ENCODE measurements at regions of chr2 and their contacts with region 1.

Region 1: GRCh38 chr2:232521959-232522622 is 1.9 kb downstream of the PRSS56 start:
- DNase-seq: peak; percentile 78
- ATAC-seq: peak; percentile 74
- H3K4me3 ChIP-seq: peak overlapping the region in 3 of 5 experiments; percentile 32 to 58 (median 43)
- H3K4me3 Mint-ChIP-seq: peak overlapping the region; percentile 74
- H3K27ac ChIP-seq: no peak overlapping the region
- H3K27ac Mint-ChIP-seq: no peak overlapping the region
- H3K4me1 ChIP-seq: peaks cover 30 to 32% of the 10 kb centered on the region in 2 donors
- H3K4me1 Mint-ChIP-seq: peaks cover 17% of the 10 kb centered on the region
- H3K27me3 ChIP-seq: peaks cover 0 to 50% (median 22%) of the 10 kb centered on the region in 4 experiments
- H3K27me3 Mint-ChIP-seq: peaks cover 26% of the 10 kb centered on the region
- CTCF ChIP-seq: peak; percentile 94

Region 2: DNA sequence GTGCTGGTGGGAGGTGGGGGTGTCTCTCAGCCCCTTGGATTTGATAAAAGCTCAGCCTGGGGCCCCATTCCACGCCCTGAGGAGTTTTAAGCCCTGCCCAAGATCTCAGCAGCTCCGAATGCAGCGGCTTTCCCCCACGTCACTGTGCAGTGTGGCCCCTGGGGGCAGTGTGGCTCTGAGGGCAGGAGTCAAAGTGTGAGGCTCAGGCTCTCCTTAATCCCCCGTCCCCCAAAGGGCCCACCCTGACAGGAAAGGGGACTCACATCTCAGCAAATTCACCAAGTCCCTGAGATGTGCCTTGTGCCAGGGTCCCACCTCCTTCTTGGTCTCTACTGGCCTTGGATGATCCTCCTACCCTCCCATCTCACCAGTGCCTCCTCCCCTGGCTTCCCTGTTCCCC is 621.1 kb before region 1 on chr2:
- CTCF ChIA-PET with region 1: no interaction called
- POLR2A ChIA-PET with region 1: no interaction called
- intact Hi-C with region 1: loop called (anchors 5 kb)
- DNase-seq: no peak
- ATAC-seq: no peak
- H3K4me3 ChIP-seq: no peak overlapping the region
- H3K4me3 Mint-ChIP-seq: no peak overlapping the region
- H3K27ac ChIP-seq: no peak overlapping the region
- H3K27ac Mint-ChIP-seq: no peak overlapping the region
- H3K4me1 ChIP-seq: no peaks in the 10 kb centered on the region
- H3K4me1 Mint-ChIP-seq: no peaks in the 10 kb centered on the region
- H3K27me3 ChIP-seq: no peaks in the 10 kb centered on the region
- H3K27me3 Mint-ChIP-seq: peaks cover 2% of the 10 kb centered on the region
- CTCF ChIP-seq: no peak

Region 3: DNA sequence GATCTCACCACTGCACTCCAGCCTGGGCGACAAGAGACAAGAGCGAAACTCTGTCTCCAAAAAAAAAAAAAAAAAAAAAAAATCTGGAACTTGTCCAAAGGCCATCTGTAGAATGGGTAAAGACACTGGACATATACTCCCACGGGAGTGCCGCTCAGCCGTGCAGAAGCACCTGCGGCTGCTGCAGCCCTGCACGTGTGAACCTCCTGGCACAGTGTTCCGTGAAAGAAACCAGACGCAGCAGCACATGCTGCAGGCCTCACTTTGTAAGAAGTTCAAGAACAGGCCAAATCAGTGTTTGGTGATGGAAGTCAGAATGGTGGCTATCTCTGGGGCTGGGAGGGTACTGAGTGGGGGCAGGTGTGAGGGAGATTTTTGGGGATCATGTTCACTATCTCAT is 10.3 kb after region 1 on chr2:
- CTCF ChIA-PET with region 1: no interaction called
- POLR2A ChIA-PET with region 1: no interaction called
- intact Hi-C with region 1: no loop called
- DNase-seq: no peak
- ATAC-seq: no peak
- H3K4me3 ChIP-seq: no peak overlapping the region
- H3K4me3 Mint-ChIP-seq: no peak overlapping the region
- H3K27ac ChIP-seq: no peak overlapping the region
- H3K27ac Mint-ChIP-seq: no peak overlapping the region
- H3K4me1 ChIP-seq: no peaks in the 10 kb centered on the region
- H3K4me1 Mint-ChIP-seq: peaks cover 2% of the 10 kb centered on the region
- H3K27me3 ChIP-seq: peaks cover 0 to 15% (median 3%) of the 10 kb centered on the region in 4 experiments
- H3K27me3 Mint-ChIP-seq: peaks cover 40% of the 10 kb centered on the region
- CTCF ChIP-seq: no peak

Measured in B cell (primary cell).